ENCODE measurements at regions of chr9 and their contacts with region 1.

Region 1: GRCh38 chr9:116549061-116549664 is 137.9 kb upstream of the TRIM32 start:
- DNase-seq: peak; percentile 28 to 91 (median 80)
- ATAC-seq: peak; percentile 86 to 96 (median 91)
- H3K4me3 ChIP-seq: no peak overlapping the region
- H3K27ac ChIP-seq: peak overlapping the region in 4 of 12 donors; percentile 32 to 63 (median 36)
- H3K4me1 ChIP-seq: peaks cover 0 to 35% (median 17%) of the 10 kb centered on the region in 12 donors
- H3K27me3 ChIP-seq: no peaks in the 10 kb centered on the region
- CTCF ChIP-seq: no peak
- POLR2A ChIP-seq: no peak

Region 2: GRCh38 chr9:116437411-116438370 is 111.5 kb before region 1 on chr9:
- intact Hi-C with region 1: loop called in 1 of 10 experiments (anchors 10 kb)
- DNase-seq: no peak
- ATAC-seq: no peak
- H3K4me3 ChIP-seq: no peak overlapping the region
- H3K27ac ChIP-seq: no peak overlapping the region
- H3K4me1 ChIP-seq: no peaks in the 10 kb centered on the region
- H3K27me3 ChIP-seq: no peaks in the 10 kb centered on the region
- CTCF ChIP-seq: no peak
- POLR2A ChIP-seq: no peak

Region 3: DNA sequence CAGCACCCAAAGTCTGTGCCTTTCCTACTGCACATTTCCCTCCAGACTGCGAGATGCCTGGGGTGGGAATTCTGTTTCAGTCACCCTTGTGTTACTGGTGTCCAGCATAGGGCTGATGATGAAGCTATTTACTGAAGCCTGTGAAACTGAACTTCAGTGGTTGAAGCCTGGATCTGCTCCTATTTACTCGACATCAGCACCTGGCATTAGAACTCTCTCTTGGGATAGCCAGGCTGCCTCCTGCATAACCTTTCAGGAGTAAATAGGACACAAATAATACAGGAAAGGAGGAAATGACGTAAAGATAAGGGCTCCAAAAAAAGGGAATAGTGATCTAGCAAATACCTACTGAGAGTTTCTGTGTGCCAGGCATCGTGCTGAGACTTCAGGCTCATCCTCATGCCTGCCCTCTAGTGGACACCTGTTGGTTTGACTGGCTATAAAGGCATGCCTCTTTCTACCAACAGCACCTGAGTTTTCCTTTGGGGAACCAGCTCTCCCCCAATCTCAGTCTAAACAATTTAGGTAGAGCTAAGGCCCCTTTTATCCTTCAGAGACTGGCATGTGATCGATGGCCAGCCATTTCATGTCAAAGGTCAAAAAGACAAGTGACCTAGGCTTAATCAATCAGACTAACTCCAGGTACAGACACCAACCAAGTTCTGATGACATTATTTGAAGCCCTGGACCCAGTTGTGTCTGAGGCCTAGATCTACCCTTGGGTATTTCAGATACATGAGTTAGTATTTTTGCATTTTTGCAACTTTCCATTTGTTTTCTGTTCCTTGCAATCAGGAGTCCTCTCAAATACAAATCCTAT is 54.1 kb before region 1 on chr9:
- intact Hi-C with region 1: no loop called
- DNase-seq: peak in 1 of 5 donors; percentile 27
- ATAC-seq: peak in 2 of 4 donors; percentile 27 to 45
- H3K4me3 ChIP-seq: no peak overlapping the region
- H3K27ac ChIP-seq: no peak overlapping the region
- H3K4me1 ChIP-seq: no peaks in the 10 kb centered on the region
- H3K27me3 ChIP-seq: no peaks in the 10 kb centered on the region
- CTCF ChIP-seq: peak; percentile 46 to 73 (median 61)
- POLR2A ChIP-seq: no peak

Region 4: DNA sequence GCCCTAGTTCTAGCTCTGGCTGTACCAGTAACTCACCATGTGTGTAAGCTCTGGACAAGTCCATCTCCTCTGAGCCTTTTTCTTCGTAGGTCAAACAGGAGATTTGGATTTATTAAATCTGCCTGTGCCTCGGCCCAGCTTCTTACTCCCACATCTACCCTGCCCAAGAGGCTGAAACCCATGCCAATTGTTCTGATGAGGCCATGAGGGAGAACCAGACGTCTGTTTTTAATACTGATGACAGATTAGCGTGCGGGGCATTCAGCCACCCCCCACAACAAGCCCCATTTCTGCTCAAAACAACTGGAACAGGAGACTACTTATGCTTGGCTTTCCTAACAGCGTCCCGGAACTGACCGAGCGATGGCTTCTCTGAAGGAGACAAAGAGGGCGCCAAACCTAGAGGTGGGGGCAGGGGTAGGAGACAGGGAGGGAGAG is 56.8 kb after region 1 on chr9:
- intact Hi-C with region 1: no loop called
- DNase-seq: peak in 4 of 5 donors; percentile 27 to 66 (median 42)
- ATAC-seq: peak; percentile 63 to 91 (median 86)
- H3K4me3 ChIP-seq: no peak overlapping the region
- H3K27ac ChIP-seq: peak overlapping the region in 9 of 12 donors; percentile 9 to 74 (median 45)
- H3K4me1 ChIP-seq: peaks cover 0 to 10% (median 0%) of the 10 kb centered on the region in 12 donors
- H3K27me3 ChIP-seq: no peaks in the 10 kb centered on the region
- CTCF ChIP-seq: no peak
- POLR2A ChIP-seq: no peak

Region 5: GRCh38 chr9:116757030-116757429 is 207.9 kb after region 1 on chr9:
- intact Hi-C with region 1: no loop called
- DNase-seq: no peak
- ATAC-seq: no peak
- H3K4me3 ChIP-seq: no peak overlapping the region
- H3K27ac ChIP-seq: no peak overlapping the region
- H3K4me1 ChIP-seq: no peaks in the 10 kb centered on the region
- H3K27me3 ChIP-seq: no peaks in the 10 kb centered on the region
- CTCF ChIP-seq: no peak
- POLR2A ChIP-seq: no peak

Measured in heart left ventricle (tissue), 16 donors.